ENCODE measurements at regions of chr14 and their contacts with region 1.

Region 1: GRCh38 chr14:87992718-87993628 is at the start of gene GALC:
- DNase-seq: peak; percentile 95 to 97 (median 95)
- H3K4me3 ChIP-seq: peak within 1 kb of the TSS; percentile 58 to 80
- H3K4me3 Mint-ChIP-seq: peak within 1 kb of the TSS; percentile 91 to 99 (median 97)
- H3K27ac ChIP-seq: peak within 1 kb of the TSS; percentile 93
- H3K27ac Mint-ChIP-seq: peak within 1 kb of the TSS; percentile 98 to 100 (median 99)
- H3K4me1 ChIP-seq: peaks cover 61% of the 10 kb centered on the region
- H3K4me1 Mint-ChIP-seq: peaks cover 48 to 78% (median 62%) of the 10 kb centered on the region in 4 donors
- H3K27me3 ChIP-seq: no peaks in the 10 kb centered on the region
- H3K27me3 Mint-ChIP-seq: no peaks in the 10 kb centered on the region
- total RNA-seq, gene GALC: 26.6 to 28.7 TPM

Region 2: GRCh38 chr14:87952307-87953094 is 40.5 kb before region 1 on chr14:
- CTCF ChIA-PET with region 1: interaction called, 15 read pairs
- POLR2A ChIA-PET with region 1: interaction called, 136 read pairs
- intact Hi-C with region 1: loop called (anchors 5 kb)
- DNase-seq: peak; percentile 13 to 58 (median 45)
- H3K4me3 ChIP-seq: no peak overlapping the region
- H3K4me3 Mint-ChIP-seq: peak overlapping the region; percentile 67 to 92 (median 86)
- H3K27ac ChIP-seq: peak overlapping the region; percentile 47
- H3K27ac Mint-ChIP-seq: peak overlapping the region; percentile 88 to 97 (median 93)
- H3K4me1 ChIP-seq: peaks cover 53% of the 10 kb centered on the region
- H3K4me1 Mint-ChIP-seq: peaks cover 41 to 69% (median 57%) of the 10 kb centered on the region in 4 donors
- H3K27me3 ChIP-seq: no peaks in the 10 kb centered on the region
- H3K27me3 Mint-ChIP-seq: no peaks in the 10 kb centered on the region

Region 3: DNA sequence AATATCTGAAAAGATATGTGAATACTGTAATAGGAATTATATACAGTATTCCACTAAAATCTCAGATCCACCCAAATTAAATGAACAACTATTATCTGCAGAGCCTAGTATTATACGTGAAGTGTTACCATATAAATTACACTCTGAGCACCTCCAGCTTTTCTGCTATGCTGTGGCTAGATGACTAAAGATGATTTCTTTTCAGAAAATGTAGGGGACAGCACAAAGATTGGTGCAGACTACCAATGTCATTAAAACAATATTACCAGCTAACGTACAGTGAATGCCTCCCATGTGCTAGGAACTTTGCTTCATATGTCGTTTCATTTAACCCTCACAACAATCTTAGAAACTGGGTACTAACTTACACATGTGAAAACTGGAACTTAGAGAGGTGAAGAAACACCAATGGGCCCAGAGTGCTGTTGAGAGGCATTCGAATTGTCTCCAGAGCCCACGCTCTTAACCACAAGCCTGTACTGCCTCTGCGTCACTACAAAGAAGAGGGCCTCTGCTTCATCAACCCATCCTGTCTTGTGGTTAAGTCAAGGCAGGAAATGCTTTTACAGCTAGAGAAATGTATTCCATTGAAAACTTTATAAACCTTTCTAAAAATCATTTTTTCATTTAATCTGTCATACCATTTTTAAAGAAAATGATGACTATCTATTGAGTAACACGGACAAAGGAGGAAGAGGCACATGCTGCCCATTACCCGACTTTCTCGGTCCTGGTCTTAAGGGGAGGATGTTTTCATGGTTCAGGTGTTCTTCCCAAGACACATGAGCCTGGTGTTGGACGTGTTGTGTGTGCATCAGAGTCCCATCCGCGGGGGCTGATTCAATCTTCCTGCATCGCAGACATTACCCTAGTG is 13.2 kb after region 1 on chr14:
- CTCF ChIA-PET with region 1: interaction called, 7 read pairs
- POLR2A ChIA-PET with region 1: interaction called, 207 read pairs
- intact Hi-C with region 1: loop called (anchors 1 kb)
- DNase-seq: peak; percentile 82 to 92 (median 87)
- H3K4me3 ChIP-seq: peak overlapping the region; percentile 49 to 73
- H3K4me3 Mint-ChIP-seq: peak overlapping the region; percentile 77 to 97 (median 88)
- H3K27ac ChIP-seq: peak overlapping the region; percentile 88
- H3K27ac Mint-ChIP-seq: peak overlapping the region; percentile 97 to 99 (median 99)
- H3K4me1 ChIP-seq: peaks cover 56% of the 10 kb centered on the region
- H3K4me1 Mint-ChIP-seq: peaks cover 42 to 74% (median 54%) of the 10 kb centered on the region in 4 donors
- H3K27me3 ChIP-seq: no peaks in the 10 kb centered on the region
- H3K27me3 Mint-ChIP-seq: no peaks in the 10 kb centered on the region

Region 4: GRCh38 chr14:88013750-88014349 is 20.9 kb after region 1 on chr14:
- CTCF ChIA-PET with region 1: interaction called, 15 read pairs
- POLR2A ChIA-PET with region 1: interaction called, 16 read pairs
- intact Hi-C with region 1: no loop called
- DNase-seq: peak in 4 of 5 donors; percentile 29 to 46 (median 38)
- H3K4me3 ChIP-seq: no peak overlapping the region
- H3K4me3 Mint-ChIP-seq: peak overlapping the region in 6 of 8 donors; percentile 3 to 69 (median 44)
- H3K27ac ChIP-seq: no peak overlapping the region
- H3K27ac Mint-ChIP-seq: peak overlapping the region; percentile 9 to 91 (median 65)
- H3K4me1 ChIP-seq: peaks cover 59% of the 10 kb centered on the region
- H3K4me1 Mint-ChIP-seq: peaks cover 49 to 77% (median 64%) of the 10 kb centered on the region in 4 donors
- H3K27me3 ChIP-seq: no peaks in the 10 kb centered on the region
- H3K27me3 Mint-ChIP-seq: no peaks in the 10 kb centered on the region

Region 5: DNA sequence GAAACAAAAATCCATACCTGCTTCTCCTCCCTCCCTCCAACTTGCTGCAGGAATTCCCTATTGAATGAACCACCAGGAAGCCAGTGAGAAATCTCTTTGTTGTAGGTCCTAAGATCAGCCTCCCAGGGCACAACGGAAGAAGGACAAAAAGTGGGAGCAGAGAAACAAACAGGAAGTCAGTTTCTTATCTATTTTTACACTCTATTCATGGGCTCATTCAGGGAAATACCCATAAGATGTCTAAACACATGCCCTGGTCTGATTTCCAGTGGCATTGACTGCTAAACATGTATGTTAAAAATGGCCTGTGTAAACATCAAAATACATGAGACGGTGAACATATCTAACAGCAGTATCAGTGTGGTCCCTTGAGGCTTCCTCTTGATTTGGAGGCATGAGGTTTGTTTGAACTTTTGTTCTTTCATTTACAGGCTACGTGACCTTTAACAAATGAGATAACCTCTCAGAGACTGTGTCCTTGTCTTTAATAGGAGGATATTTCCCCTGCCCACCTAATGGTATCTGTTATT is 30.8 kb after region 1 on chr14:
- CTCF ChIA-PET with region 1: no interaction called
- POLR2A ChIA-PET with region 1: interaction called, 18 read pairs
- intact Hi-C with region 1: loop called (anchors 2 kb)
- DNase-seq: peak in 4 of 5 donors; percentile 20 to 39 (median 34)
- H3K4me3 ChIP-seq: no peak overlapping the region
- H3K4me3 Mint-ChIP-seq: peak overlapping the region in 7 of 8 donors; percentile 25 to 74 (median 50)
- H3K27ac ChIP-seq: no peak overlapping the region
- H3K27ac Mint-ChIP-seq: peak overlapping the region; percentile 47 to 91 (median 84)
- H3K4me1 ChIP-seq: peaks cover 70% of the 10 kb centered on the region
- H3K4me1 Mint-ChIP-seq: peaks cover 55 to 84% (median 73%) of the 10 kb centered on the region in 4 donors
- H3K27me3 ChIP-seq: no peaks in the 10 kb centered on the region
- H3K27me3 Mint-ChIP-seq: no peaks in the 10 kb centered on the region

Region 6: GRCh38 chr14:88030079-88030478 is 37.1 kb after region 1 on chr14:
- CTCF ChIA-PET with region 1: interaction called, 5 read pairs
- POLR2A ChIA-PET with region 1: interaction called, 18 read pairs
- intact Hi-C with region 1: no loop called
- DNase-seq: peak in 1 of 5 donors; percentile 18
- H3K4me3 ChIP-seq: no peak overlapping the region
- H3K4me3 Mint-ChIP-seq: peak overlapping the region in 5 of 8 donors; percentile 12 to 63 (median 43)
- H3K27ac ChIP-seq: no peak overlapping the region
- H3K27ac Mint-ChIP-seq: peak overlapping the region in 5 of 7 donors; percentile 11 to 81 (median 71)
- H3K4me1 ChIP-seq: peaks cover 51% of the 10 kb centered on the region
- H3K4me1 Mint-ChIP-seq: peaks cover 42 to 62% (median 52%) of the 10 kb centered on the region in 4 donors
- H3K27me3 ChIP-seq: no peaks in the 10 kb centered on the region
- H3K27me3 Mint-ChIP-seq: no peaks in the 10 kb centered on the region